ENCODE measurements at regions of chr6 and their contacts with region 1.

Region 1: DNA sequence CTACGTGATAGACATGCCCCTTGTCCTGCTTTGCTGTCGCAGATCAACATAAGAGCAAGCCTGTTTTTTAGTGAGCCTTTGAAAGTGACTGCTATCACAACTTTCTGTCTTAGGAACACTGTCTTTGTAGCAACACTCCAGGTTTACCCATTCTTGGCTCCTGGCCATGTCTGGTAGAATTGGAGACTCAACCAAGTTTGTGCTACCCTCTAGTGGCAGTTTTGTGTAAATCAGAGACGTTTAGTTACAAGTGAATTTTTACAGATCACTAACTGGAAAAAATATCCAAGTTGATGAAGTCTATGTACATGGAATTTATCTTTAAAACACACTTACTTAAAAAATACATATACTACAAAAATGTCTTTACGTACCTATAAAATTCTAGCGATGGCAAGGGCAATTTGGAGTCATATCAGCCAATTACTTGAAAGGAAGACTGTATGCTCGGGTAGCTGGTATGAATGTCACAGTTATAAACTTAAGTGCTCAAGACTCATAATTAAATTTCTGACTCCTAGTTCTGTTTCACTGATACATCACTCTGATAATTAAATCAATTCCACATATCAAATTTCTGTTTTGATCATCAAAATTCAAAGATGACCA is 101.4 kb downstream of the ADGB start:
- DNase-seq: peak; percentile 77 to 91 (median 86)
- H3K4me3 ChIP-seq: no peak overlapping the region
- H3K27ac ChIP-seq: no peak overlapping the region
- H3K4me1 ChIP-seq: no peaks in the 10 kb centered on the region
- H3K27me3 ChIP-seq: no peaks in the 10 kb centered on the region
- CTCF ChIP-seq: peak; percentile 63 to 82 (median 80)
- POLR2A ChIP-seq: no peak

Region 2: DNA sequence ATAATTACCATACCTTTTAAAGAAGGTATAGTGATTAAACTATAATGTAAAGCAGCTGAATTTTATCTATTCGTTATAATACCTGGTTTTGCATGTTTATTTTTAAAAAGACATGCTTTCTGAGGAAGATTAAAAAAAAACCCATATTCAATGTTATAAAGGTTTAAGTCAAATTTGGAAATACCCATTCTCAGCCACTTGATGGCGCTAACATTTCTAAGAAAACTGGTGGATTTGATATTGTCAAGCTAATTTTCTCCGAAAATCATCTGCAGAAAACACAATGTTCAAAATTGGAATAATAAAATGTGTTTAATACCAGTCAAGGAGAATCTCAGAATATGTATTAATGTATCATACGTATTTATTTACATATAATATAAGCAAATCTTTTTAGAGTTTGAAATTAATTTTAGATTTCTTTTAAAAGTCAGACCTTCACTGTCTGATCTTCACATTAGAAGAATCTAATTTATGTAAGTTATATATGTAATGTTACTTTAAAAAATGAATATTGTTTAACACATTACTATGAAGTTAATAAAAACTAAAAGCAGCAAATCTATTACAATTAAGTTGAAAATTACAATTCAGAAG is 771.0 kb before region 1 on chr6:
- intact Hi-C with region 1: loop called in 1 of 2 experiments (anchors 10 kb)
- DNase-seq: peak in 3 of 7 donors; percentile 9 to 25 (median 21)
- H3K4me3 ChIP-seq: no peak overlapping the region
- H3K27ac ChIP-seq: no peak overlapping the region
- H3K4me1 ChIP-seq: no peaks in the 10 kb centered on the region
- H3K27me3 ChIP-seq: no peaks in the 10 kb centered on the region
- CTCF ChIP-seq: peak; percentile 47 to 77 (median 64)
- POLR2A ChIP-seq: no peak

Region 3: DNA sequence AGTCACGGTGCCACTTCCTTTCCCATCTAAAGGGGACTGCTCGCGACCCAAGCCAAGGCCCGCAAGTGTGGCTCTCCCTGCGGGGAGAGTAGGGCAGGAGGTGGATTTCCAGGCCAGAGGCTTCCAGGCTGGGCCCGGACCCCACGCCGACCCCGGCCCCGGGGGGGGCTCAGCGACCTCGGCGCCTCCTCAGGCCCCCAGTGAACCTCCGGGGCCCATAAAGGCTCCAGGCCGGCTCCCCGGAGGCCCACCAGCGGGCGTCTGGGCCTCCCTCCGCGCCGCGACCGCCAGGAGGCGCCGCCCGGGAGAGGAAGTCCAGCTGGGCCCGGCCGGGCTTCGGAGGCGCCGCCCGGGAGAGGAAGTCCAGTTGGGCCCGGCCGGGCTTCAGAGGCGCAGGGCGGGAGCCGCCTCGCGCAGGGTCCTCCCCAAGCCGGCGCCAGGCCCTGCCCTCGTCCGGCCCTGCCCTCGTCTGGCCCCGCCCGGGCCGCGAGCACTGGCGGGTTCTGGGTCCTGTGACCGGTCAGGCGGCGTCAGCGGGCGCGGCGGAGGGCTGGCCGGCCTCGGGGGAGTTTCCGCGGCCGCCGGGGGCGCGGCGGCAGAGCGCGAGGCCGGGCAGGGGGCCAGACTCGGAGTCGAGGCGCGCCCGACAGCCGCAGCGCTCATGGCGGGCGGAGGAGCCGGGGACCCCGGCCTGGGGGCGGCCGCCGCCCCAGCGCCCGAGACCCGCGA is 156.8 kb before region 1 on chr6 and contains the start of gene RAB32:
- intact Hi-C with region 1: loop called in 1 of 2 experiments (anchors 5 kb)
- DNase-seq: peak; percentile 93 to 96 (median 95)
- H3K4me3 ChIP-seq: peak within 1 kb of the TSS in 3 of 4 donors; percentile 7 to 77 (median 55)
- H3K27ac ChIP-seq: peak within 1 kb of the TSS in 4 of 5 donors; percentile 88 to 97 (median 93)
- H3K4me1 ChIP-seq: peaks cover 12 to 25% of the 10 kb centered on the region in 2 donors
- H3K27me3 ChIP-seq: no peaks in the 10 kb centered on the region
- CTCF ChIP-seq: peak in 5 of 6 experiments; percentile 29 to 77 (median 72)
- POLR2A ChIP-seq: peak; percentile 74 to 85
- total RNA-seq, gene RAB32: 11.9 to 40.0 (median 22.1) TPM

Region 4: GRCh38 chr6:147322299-147323162 is 622.3 kb after region 1 on chr6:
- intact Hi-C with region 1: no loop called
- DNase-seq: no peak
- H3K4me3 ChIP-seq: peak overlapping the region in 1 of 4 donors; percentile 15
- H3K27ac ChIP-seq: peak overlapping the region in 2 of 5 donors; percentile 12 to 64
- H3K4me1 ChIP-seq: no peaks in the 10 kb centered on the region
- H3K27me3 ChIP-seq: no peaks in the 10 kb centered on the region
- CTCF ChIP-seq: no peak
- POLR2A ChIP-seq: no peak

Measured in adrenal gland (tissue), 19 donors.